GM12878 (cell line): ENCODE measurements at regions of chr14 and their contacts with region 1.

Region 1: DNA sequence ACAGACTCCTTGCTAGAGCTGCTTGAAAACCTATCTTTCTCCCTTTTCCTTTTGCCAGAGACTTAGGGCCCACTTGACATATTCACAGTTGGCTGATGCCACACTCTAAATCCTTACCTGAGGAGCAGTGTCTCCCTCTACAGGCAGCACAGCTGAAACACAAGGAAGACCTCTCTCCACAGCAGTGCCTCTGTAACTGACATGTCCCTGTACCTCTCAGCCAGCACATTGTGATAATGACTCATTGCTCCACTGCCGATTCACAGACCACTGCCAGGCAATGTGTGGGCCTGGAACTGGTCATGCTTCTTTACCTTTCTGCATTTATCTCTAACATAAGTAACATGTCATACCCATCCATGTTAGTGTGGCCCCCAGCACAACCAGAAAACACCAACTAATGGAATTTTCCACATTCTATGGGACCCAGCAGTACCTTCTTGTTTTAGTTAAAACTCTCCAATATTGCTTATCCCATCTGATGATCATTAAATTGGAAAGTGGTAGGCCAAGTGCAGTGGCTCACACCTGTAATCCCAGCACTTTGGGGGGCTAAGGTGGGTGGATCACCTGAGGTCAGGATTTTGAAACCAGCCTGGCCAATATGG is 56.5 kb downstream of the GTF2A1 start:
- DNase-seq: peak; percentile 48
- ATAC-seq: peak; percentile 97
- H3K4me3 ChIP-seq: no peak overlapping the region
- H3K27ac ChIP-seq: no peak overlapping the region
- H3K4me1 ChIP-seq: 0 out of 2 replicates have a peak, but pooled peaks cover 2% of the 10 kb centered on the region
- H3K27me3 ChIP-seq: no peaks in the 10 kb centered on the region
- CTCF ChIP-seq: peak; percentile 77 to 79 (median 77)
- EP300 ChIP-seq: no peak
- POLR2A ChIP-seq: no peak
- RAD21 ChIP-seq: peak; percentile 89

Region 2: DNA sequence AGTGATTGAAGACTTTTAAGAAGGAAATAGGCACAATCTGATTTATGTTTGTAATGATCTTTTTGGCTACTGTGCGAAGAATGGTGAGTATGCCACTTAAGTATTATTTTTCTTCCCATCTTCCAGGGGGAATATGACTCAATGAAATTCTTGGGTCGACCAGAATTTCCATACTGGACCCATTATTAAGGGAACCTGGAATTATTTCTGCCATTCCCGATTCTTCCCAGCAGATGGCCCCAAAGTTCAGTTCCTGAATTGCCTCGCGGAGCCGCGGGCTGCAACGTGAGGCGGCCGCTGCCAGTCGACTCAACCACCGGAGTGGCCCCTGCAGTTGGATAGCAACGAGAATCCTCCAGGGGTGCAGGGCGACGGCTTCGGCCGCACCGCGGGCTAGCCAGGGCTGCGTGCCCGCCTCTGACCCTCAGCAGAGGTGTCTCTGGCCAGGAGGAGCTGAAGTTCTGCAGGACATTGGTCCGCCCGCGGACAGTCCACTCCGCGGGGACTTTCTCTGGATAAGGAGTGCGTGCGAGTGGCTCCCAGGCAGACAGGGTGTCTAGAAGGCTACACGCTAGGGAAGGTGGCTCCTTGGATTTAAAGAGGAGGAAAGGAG is 209.5 kb before region 1 on chr14:
- CTCF ChIA-PET with region 1: interaction called, 10 read pairs
- POLR2A ChIA-PET with region 1: no interaction called
- RAD21 ChIA-PET with region 1: interaction called, 4 read pairs
- SMC1A ChIA-PET with region 1: interaction called, 3 read pairs
- in situ Hi-C with region 1: loop called (anchors 5 kb)
- intact Hi-C with region 1: loop called (anchors 1 kb)
- DNase-seq: no peak
- ATAC-seq: peak; percentile 46
- H3K4me3 ChIP-seq: no peak overlapping the region; the same call in 1 of the 2 replicates
- H3K27ac ChIP-seq: no peak overlapping the region
- H3K4me1 ChIP-seq: peaks cover 12% of the 10 kb centered on the region
- H3K27me3 ChIP-seq: peaks cover 0 to 5% of the 10 kb centered on the region in 2 experiments; a peak in 3 of 4 replicates
- CTCF ChIP-seq: peak; percentile 70 to 83 (median 71)
- EP300 ChIP-seq: no peak
- POLR2A ChIP-seq: no peak
- RAD21 ChIP-seq: peak; percentile 84

Region 3: DNA sequence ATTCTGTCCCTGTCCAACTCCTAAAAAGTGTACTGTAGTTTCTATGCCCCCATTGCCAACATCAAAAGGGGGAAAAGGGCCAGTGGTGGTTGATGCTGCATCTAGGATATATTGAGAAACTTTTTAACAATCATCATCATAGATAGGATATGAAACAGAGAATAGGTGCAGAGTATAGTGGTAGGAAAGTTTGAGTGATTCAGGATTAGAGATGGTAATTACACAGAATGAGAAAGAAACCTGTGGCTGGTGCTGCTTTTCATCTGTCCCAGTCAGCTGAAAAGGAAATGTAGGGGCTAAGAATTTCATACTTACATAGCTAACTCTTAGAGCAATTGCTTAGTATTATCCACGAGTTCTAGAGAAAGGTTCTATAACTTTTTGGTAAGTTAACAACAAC is 11.1 kb before region 1 on chr14:
- CTCF ChIA-PET with region 1: interaction called, 4 read pairs
- POLR2A ChIA-PET with region 1: interaction called, 3 read pairs
- RAD21 ChIA-PET with region 1: no interaction called
- SMC1A ChIA-PET with region 1: interaction called, 11 read pairs
- in situ Hi-C with region 1: no loop called
- intact Hi-C with region 1: no loop called
- DNase-seq: no peak
- ATAC-seq: no peak
- H3K4me3 ChIP-seq: no peak overlapping the region
- H3K27ac ChIP-seq: no peak overlapping the region
- H3K4me1 ChIP-seq: no peaks in the 10 kb centered on the region
- H3K27me3 ChIP-seq: no peaks in the 10 kb centered on the region
- CTCF ChIP-seq: no peak
- EP300 ChIP-seq: no peak
- POLR2A ChIP-seq: no peak
- RAD21 ChIP-seq: no peak

Region 4: GRCh38 chr14:81246461-81247145 is 82.3 kb after region 1 on chr14:
- CTCF ChIA-PET with region 1: no interaction called
- POLR2A ChIA-PET with region 1: no interaction called
- RAD21 ChIA-PET with region 1: no interaction called
- SMC1A ChIA-PET with region 1: no interaction called
- in situ Hi-C with region 1: no loop called
- intact Hi-C with region 1: no loop called
- DNase-seq: no peak
- ATAC-seq: no peak
- H3K4me3 ChIP-seq: no peak overlapping the region
- H3K27ac ChIP-seq: no peak overlapping the region
- H3K4me1 ChIP-seq: no peaks in the 10 kb centered on the region
- H3K27me3 ChIP-seq: no peaks in the 10 kb centered on the region; a peak in 1 of 4 replicates
- CTCF ChIP-seq: no peak
- EP300 ChIP-seq: no peak
- POLR2A ChIP-seq: no peak
- RAD21 ChIP-seq: no peak

Region 5: DNA sequence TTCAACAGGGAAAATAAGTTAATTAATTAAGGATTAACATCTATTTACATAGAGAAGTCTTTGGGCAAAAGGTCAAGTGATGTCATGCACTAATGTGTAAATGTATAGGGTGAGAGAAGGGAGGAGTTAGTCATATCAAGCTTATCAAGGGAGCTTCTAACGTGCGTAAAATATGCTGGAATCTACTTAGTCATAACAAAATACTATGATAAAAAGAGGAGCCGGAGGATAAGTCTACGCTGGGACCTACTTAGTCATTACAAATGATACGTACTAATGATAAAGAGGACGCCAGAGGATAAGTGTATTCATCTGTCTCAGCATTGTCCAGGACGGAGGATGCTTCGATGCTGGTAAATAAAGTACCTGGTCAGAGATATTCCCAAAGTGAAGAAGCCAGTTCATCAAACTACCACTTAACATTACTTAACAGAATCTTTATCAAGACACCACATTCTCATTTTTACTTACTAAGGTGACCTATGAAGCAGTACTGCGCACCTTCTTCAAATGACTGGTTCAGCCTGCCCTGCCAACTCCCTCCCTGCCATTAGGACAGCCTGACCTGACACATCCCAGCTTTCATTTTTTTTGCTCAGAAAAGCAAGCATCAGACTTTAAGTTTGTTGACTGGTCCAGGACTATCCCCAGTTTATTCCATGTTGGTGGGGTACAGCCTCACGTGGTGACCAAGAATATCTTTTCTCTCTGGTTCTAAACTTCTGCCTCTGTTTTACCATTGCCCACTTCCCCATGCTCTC is 122.9 kb after region 1 on chr14:
- CTCF ChIA-PET with region 1: no interaction called
- POLR2A ChIA-PET with region 1: no interaction called
- RAD21 ChIA-PET with region 1: no interaction called
- SMC1A ChIA-PET with region 1: no interaction called
- in situ Hi-C with region 1: no loop called
- intact Hi-C with region 1: no loop called
- DNase-seq: no peak
- ATAC-seq: no peak
- H3K4me3 ChIP-seq: no peak overlapping the region
- H3K27ac ChIP-seq: no peak overlapping the region
- H3K4me1 ChIP-seq: no peaks in the 10 kb centered on the region
- H3K27me3 ChIP-seq: no peaks in the 10 kb centered on the region; a peak in 1 of 4 replicates
- CTCF ChIP-seq: no peak
- EP300 ChIP-seq: no peak
- POLR2A ChIP-seq: no peak
- RAD21 ChIP-seq: no peak